ENCODE measurements at regions of chr19 and their contacts with region 1.

Region 1: DNA sequence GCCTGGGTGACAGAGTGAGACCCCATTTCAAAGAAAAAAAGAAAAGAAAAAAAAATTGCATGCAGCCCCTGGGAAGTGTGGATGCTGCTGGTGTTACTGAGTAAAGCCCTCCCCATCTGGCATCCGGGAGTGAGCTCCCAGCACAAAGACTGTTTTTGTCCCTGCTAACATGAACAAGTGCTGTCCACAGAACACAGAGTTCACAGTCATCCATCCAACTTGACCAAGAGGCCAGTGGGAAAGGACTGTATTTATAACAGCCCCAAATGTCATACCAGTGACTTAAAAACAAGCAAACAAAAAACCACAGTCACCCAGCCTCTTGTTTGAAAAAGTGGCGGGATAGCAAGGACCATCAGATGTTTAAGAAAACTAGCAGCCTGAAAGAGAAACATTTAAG is 10.8 kb downstream of the FBXO17 start:
- DNase-seq: no peak
- ATAC-seq: no peak
- H3K4me3 Mint-ChIP-seq: no peak overlapping the region
- H3K27ac Mint-ChIP-seq: no peak overlapping the region; the same call in 1 of the 2 replicates
- H3K4me1 Mint-ChIP-seq: peaks cover 9% of the 10 kb centered on the region
- H3K27me3 Mint-ChIP-seq: no peaks in the 10 kb centered on the region
- CTCF ChIP-seq: no peak

Region 2: GRCh38 chr19:38952395-38953165 is 12.2 kb before region 1 on chr19:
- CTCF ChIA-PET with region 1: interaction called, 11 read pairs
- POLR2A ChIA-PET with region 1: no interaction called
- DNase-seq: peak; percentile 42
- ATAC-seq: peak; percentile 41
- H3K4me3 Mint-ChIP-seq: no peak overlapping the region
- H3K27ac Mint-ChIP-seq: peak overlapping the region; percentile 33
- H3K4me1 Mint-ChIP-seq: peaks cover 11% of the 10 kb centered on the region
- H3K27me3 Mint-ChIP-seq: peaks cover 6% of the 10 kb centered on the region
- CTCF ChIP-seq: peak; percentile 42

Region 3: GRCh38 chr19:39038098-39038497 is 73.4 kb after region 1 on chr19:
- CTCF ChIA-PET with region 1: interaction called, 10 read pairs
- POLR2A ChIA-PET with region 1: no interaction called
- DNase-seq: peak; percentile 69
- ATAC-seq: peak; percentile 100
- H3K4me3 Mint-ChIP-seq: no peak overlapping the region
- H3K27ac Mint-ChIP-seq: no peak overlapping the region
- H3K4me1 Mint-ChIP-seq: peaks cover 7% of the 10 kb centered on the region; the same call in 1 of the 2 replicates
- H3K27me3 Mint-ChIP-seq: peaks cover 23% of the 10 kb centered on the region
- CTCF ChIP-seq: no peak

Measured in WTC11 (cell line).